Activated CD8-positive, alpha-beta memory T cell treated with anti-CD3 and anti-CD28 coated beads, Interleukin-2, amount 10 ng/mL, durations not matched to agents 7 days and 5 days (primary cell): ENCODE measurements at regions of chr5 and their contacts with region 1.

Region 1: DNA sequence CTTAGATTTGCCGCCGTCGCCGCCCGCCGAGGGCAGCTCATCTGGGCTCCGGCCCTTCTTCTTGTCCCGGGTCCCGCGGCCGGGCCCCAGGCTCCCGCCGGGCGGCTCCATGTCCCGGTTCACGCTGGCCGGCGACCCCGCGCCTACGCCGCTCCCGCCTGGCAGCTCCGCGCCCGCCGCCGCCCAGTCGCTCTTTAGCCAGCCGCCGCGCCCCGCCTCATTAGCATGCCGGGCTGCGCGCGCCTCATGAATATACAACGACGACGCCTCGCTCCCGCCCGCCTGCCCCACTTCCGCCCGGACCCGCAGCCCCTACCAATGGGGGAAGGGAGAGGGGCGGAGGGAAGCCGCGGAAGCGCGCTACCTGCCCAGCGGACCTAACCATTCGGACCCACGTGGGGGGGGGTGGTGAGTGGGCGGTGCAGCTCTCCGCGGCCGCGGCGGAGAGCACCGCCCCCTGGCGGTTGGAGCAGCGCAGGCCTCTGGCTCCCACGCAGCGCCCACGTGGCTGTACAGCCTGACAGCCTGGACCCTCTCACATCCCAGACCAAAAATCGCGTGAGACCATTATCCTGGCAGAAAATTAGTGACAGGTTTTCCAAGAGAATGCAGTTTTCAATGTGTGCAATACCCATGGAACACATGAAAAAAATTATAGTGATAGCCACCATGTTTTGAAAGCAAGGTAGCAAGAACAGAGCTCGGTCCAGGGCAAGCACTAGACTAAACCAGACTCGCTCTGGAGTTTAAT is at the start of gene DIAPH1:
- DNase-seq: peak; percentile 98
- ATAC-seq: peak; percentile 93
- H3K4me3 Mint-ChIP-seq: peak within 1 kb of the TSS; percentile 100
- H3K27ac Mint-ChIP-seq: peak within 1 kb of the TSS; percentile 98
- H3K4me1 Mint-ChIP-seq: peaks cover 55% of the 10 kb centered on the region
- H3K27me3 Mint-ChIP-seq: no peaks in the 10 kb centered on the region
- total RNA-seq, gene DIAPH1: 284 to 295 TPM

Region 2: GRCh38 chr5:141605523-141606277 is 13.3 kb before region 1 on chr5:
- CTCF ChIA-PET with region 1: interaction called, 274 read pairs
- DNase-seq: peak; percentile 92
- ATAC-seq: peak; percentile 88
- H3K4me3 Mint-ChIP-seq: peak overlapping the region; percentile 68
- H3K27ac Mint-ChIP-seq: peak overlapping the region; percentile 95
- H3K4me1 Mint-ChIP-seq: peaks cover 77% of the 10 kb centered on the region
- H3K27me3 Mint-ChIP-seq: no peaks in the 10 kb centered on the region